ENCODE measurements at regions of chr7 and their contacts with region 1.

Region 1: DNA sequence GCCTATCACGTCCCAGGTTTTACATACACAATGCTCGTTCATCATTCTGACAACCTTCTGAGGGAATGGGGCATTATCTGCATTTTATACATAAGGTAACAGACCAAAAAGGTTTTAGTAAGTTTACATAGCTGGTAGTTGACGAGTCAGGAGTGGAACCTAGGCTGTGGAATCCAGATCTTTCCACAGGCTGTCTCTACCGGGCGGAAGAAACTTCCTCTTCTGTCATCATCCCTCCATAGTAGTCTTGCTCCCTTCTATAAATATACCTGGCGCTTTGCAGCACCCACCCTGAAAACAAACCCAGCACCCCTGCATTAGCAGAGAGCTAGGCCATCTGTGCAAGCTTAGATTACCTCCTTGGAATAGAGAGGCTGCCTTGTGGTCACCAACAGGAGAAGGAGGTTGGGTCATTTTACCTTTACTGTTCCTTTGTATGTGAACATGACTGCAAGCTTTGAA is 1.3 kb downstream of the TSPAN13 start:
- DNase-seq: no peak
- H3K4me3 ChIP-seq: no peak overlapping the region
- H3K27ac ChIP-seq: peak overlapping the region in 1 of 2 donors; percentile 46
- H3K4me1 ChIP-seq: no peaks in the 10 kb centered on the region
- H3K27me3 ChIP-seq: no peaks in the 10 kb centered on the region
- CTCF ChIP-seq: no peak
- POLR2A ChIP-seq: no peak

Region 2: DNA sequence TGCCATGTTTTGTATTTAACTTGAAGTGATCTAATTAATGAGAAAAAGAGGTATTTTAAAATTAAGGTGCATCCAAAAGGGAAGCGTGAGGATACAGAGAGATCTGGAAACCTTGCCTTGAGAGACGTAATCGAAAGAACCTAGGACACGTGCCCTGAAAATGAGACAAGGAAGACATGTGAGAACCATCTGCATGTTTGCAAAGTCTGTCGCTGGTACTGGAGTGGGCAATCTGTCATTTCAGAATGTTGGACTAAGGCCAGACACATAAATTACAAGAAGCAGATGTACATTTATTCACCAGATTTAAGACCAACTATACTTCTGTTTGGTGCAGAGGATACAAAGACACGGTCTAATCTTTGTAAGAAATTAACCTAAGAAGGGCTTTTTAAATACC is 40.7 kb after region 1 on chr7:
- intact Hi-C with region 1: no loop called
- DNase-seq: no peak
- H3K4me3 ChIP-seq: no peak overlapping the region
- H3K27ac ChIP-seq: no peak overlapping the region
- H3K4me1 ChIP-seq: no peaks in the 10 kb centered on the region
- H3K27me3 ChIP-seq: no peaks in the 10 kb centered on the region
- CTCF ChIP-seq: no peak
- POLR2A ChIP-seq: no peak

Region 3: GRCh38 chr7:16867328-16867727 is 112.4 kb after region 1 on chr7:
- intact Hi-C with region 1: no loop called
- DNase-seq: no peak
- H3K4me3 ChIP-seq: no peak overlapping the region
- H3K27ac ChIP-seq: no peak overlapping the region
- H3K4me1 ChIP-seq: no peaks in the 10 kb centered on the region
- H3K27me3 ChIP-seq: no peaks in the 10 kb centered on the region
- CTCF ChIP-seq: no peak
- POLR2A ChIP-seq: no peak

Region 4: GRCh38 chr7:18461785-18462467 is 1707.0 kb after region 1 on chr7:
- intact Hi-C with region 1: loop called (anchors 5 kb)
- DNase-seq: no peak
- H3K4me3 ChIP-seq: no peak overlapping the region
- H3K27ac ChIP-seq: no peak overlapping the region
- H3K4me1 ChIP-seq: no peaks in the 10 kb centered on the region
- H3K27me3 ChIP-seq: no peaks in the 10 kb centered on the region
- CTCF ChIP-seq: no peak
- POLR2A ChIP-seq: no peak